Ascending aorta (tissue), 2 donors: ENCODE measurements at regions of chr1 and their contacts with region 1.

Region 1: GRCh38 chr1:212455803-212456528 is 23.2 kb downstream of the NENF start:
- DNase-seq: peak; percentile 55 to 96
- H3K4me3 ChIP-seq: peak overlapping the region in 1 of 2 donors; percentile 31
- H3K27ac ChIP-seq: peak overlapping the region; percentile 43 to 78
- H3K4me1 ChIP-seq: peaks cover 13 to 24% of the 10 kb centered on the region in 2 donors
- H3K27me3 ChIP-seq: no peaks in the 10 kb centered on the region
- CTCF ChIP-seq: peak; percentile 94 to 98 (median 94)

Region 2: GRCh38 chr1:212035123-212035834 is 420.7 kb before region 1 on chr1 and contains the starts of genes DTL and INTS7:
- intact Hi-C with region 1: loop called (anchors 1 kb)
- DNase-seq: peak; percentile 96 to 99
- H3K4me3 ChIP-seq: peak within 1 kb of the TSS; percentile 64 to 78
- H3K27ac ChIP-seq: peak within 1 kb of the TSS; percentile 77 to 85
- H3K4me1 ChIP-seq: peaks cover 0 to 12% of the 10 kb centered on the region in 2 donors
- H3K27me3 ChIP-seq: no peaks in the 10 kb centered on the region
- CTCF ChIP-seq: peak; percentile 85 to 95 (median 90)
- total RNA-seq, gene DTL: not detected
- total RNA-seq, gene INTS7: 10.5 TPM

Region 3: GRCh38 chr1:212234431-212235395 is 221.3 kb before region 1 on chr1:
- intact Hi-C with region 1: loop called (anchors 2 kb)
- DNase-seq: peak; percentile 54 to 86
- H3K4me3 ChIP-seq: no peak overlapping the region
- H3K27ac ChIP-seq: peak overlapping the region; percentile 62 to 65
- H3K4me1 ChIP-seq: peaks cover 0 to 14% of the 10 kb centered on the region in 2 donors
- H3K27me3 ChIP-seq: no peaks in the 10 kb centered on the region
- CTCF ChIP-seq: no peak

Region 4: DNA sequence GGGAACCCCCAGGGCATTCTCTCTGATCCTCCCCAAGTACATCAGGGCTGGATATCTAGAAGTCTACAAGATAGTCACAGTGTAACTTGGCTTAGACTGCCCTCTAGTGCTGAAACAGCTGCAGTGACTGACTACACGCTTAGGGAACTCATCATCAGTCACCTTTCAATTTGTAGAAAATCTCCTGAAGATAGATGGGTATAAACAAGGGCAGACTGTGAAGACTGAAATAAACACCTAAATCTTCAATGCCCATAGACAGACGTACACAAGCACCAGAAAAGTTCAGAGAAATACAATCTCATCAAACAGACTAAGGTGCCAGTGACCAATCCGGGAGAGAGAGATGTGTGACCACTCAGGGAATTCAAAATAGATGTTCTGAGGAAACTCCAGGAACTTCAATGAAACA is 87.9 kb before region 1 on chr1:
- intact Hi-C with region 1: loop called (anchors 2 kb)
- DNase-seq: peak in 1 of 2 donors; percentile 70
- H3K4me3 ChIP-seq: no peak overlapping the region
- H3K27ac ChIP-seq: no peak overlapping the region
- H3K4me1 ChIP-seq: no peaks in the 10 kb centered on the region
- H3K27me3 ChIP-seq: no peaks in the 10 kb centered on the region
- CTCF ChIP-seq: peak; percentile 62 to 84 (median 65)

Region 5: DNA sequence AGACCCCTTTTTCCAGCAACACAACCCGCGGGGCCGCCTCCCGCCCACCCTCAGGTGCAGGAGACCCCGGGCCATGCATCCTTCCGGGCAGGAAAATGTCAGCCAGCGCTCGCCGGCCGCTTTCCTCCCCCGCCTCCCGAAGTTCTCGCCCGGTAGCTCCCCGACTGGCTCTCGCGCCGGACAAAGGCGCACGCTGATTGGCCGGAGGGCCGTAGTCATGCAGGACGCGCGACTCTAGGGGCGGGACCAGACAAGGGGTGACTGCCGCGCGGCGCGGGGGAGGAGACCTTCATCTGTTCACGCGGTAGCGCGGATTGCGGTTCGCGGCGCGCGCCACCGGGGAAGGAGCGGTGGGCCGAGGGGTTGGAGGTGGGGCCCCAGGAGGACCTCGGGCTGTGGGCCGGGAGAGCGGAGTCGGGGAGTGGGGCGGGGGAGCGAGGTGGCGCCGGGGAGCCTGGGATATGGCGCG is 402.1 kb after region 1 on chr1 and contains the start of gene FLVCR1:
- intact Hi-C with region 1: loop called (anchors 10 kb)
- DNase-seq: peak; percentile 95 to 99
- H3K4me3 ChIP-seq: peak within 1 kb of the TSS; percentile 81 to 96
- H3K27ac ChIP-seq: peak within 1 kb of the TSS; percentile 85 to 94
- H3K4me1 ChIP-seq: peaks cover 6 to 9% of the 10 kb centered on the region in 2 donors
- H3K27me3 ChIP-seq: no peaks in the 10 kb centered on the region
- CTCF ChIP-seq: no peak
- total RNA-seq, gene FLVCR1: 5.7 TPM